ENCODE measurements at regions of chr20 and their contacts with region 1.

Region 1: GRCh38 chr20:10074513-10074912 is 39.7 kb downstream of the ANKEF1 start:
- DNase-seq: peak; percentile 96
- ATAC-seq: peak; percentile 83
- H3K4me3 ChIP-seq: no peak overlapping the region
- H3K27ac ChIP-seq: peak overlapping the region; percentile 57
- H3K4me1 ChIP-seq: peaks cover 44% of the 10 kb centered on the region
- H3K27me3 ChIP-seq: no peaks in the 10 kb centered on the region
- CTCF ChIP-seq: no peak

Region 2: DNA sequence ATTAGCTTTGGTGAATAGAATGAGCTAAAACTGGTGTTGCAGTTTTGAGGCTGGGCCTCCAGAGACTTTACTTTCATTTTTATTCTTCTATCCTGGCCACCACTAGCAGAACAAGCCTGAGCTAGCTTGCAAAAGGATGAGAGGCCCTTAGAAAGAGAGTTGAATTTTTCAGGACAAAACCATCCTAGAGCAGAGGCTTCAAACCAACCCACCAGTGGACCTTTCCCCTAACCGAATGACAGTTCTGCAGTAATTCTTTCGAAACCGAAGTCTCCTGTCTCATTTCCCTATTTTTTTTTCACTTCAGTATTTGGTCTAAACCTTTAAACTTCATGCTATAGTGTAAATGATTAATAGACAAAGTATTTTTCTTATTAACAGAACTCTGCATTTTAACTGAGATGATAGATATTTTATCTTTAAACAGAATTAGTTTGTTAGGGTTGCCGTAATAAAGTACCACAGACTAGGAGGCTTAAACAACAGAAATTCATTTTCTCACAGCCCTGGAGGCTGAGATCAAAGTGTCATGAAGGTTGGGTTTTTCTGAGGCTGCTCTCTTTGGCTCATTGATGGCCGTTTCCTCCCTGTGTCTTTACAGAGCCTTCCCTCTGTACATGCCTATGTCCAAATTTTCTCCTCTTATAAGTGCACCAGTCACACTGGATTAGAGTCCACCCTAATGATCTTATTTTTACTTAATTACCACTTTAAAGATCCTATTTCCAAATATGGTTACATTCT is 155.1 kb before region 1 on chr20:
- CTCF ChIA-PET with region 1: no interaction called
- POLR2A ChIA-PET with region 1: no interaction called
- intact Hi-C with region 1: no loop called
- DNase-seq: no peak
- ATAC-seq: no peak
- H3K4me3 ChIP-seq: no peak overlapping the region
- H3K27ac ChIP-seq: no peak overlapping the region
- H3K4me1 ChIP-seq: no peaks in the 10 kb centered on the region
- H3K27me3 ChIP-seq: peaks cover 45% of the 10 kb centered on the region
- CTCF ChIP-seq: no peak

Region 3: DNA sequence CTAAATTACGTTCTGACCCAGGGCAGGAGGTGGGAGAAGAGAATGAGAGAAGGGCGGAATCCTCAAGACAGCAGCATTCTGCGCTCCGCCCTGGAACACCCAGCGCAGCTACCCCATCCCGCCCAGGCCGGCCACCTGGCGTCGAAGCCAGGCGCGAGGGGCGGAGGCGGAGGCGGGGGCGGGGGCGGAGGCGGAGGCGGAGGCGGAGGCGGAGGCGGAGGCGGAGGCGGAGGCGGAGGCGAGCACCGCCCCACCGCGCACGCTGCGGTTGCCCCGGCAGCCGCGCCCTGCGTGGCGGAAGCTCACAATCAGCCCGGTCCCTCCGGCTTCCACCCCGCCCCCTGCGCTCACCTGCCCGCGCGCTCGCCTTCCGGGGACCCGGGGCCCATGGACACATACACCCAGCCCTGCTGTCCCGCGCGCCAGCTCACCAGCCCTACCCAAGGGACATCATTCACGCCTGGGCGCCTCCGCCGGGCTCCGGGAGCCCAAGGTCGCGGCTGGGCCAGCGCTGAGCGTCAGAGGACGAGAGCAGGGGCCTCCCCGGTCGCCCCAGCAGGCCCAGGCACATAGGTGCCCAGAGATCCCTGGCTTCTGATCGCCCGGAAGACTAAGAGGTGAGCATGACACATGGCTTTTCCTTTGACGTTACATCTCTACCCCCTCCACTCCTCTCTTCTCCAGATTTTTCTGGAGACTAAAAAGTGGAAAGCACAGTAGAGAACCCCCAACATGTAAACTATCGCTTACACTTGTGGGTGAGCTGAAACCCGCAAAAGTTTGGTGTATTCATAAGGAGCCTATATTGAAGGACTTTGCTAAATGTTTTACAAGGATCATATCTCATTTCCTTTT is 39.6 kb before region 1 on chr20 and contains the start of gene ANKEF1:
- CTCF ChIA-PET with region 1: no interaction called
- POLR2A ChIA-PET with region 1: no interaction called
- intact Hi-C with region 1: loop called (anchors 1 kb)
- DNase-seq: peak; percentile 94
- ATAC-seq: peak; percentile 98
- H3K4me3 ChIP-seq: peak within 1 kb of the TSS; percentile 84
- H3K27ac ChIP-seq: peak within 1 kb of the TSS; percentile 67
- H3K4me1 ChIP-seq: peaks cover 20% of the 10 kb centered on the region
- H3K27me3 ChIP-seq: peaks cover 13% of the 10 kb centered on the region
- CTCF ChIP-seq: no peak
- total RNA-seq, gene ANKEF1: 11.6 and 13.1 TPM in 2 replicates

Region 4: GRCh38 chr20:10040070-10040975 is 34.2 kb before region 1 on chr20:
- CTCF ChIA-PET with region 1: no interaction called
- POLR2A ChIA-PET with region 1: no interaction called
- intact Hi-C with region 1: loop called (anchors 1 kb)
- DNase-seq: peak; percentile 98
- ATAC-seq: peak; percentile 99
- H3K4me3 ChIP-seq: no peak overlapping the region
- H3K27ac ChIP-seq: peak overlapping the region; percentile 20; the same call in 1 of the 2 replicates
- H3K4me1 ChIP-seq: peaks cover 22% of the 10 kb centered on the region
- H3K27me3 ChIP-seq: no peaks in the 10 kb centered on the region
- CTCF ChIP-seq: no peak

Region 5: GRCh38 chr20:10090588-10091166 is 16.2 kb after region 1 on chr20:
- CTCF ChIA-PET with region 1: interaction called, 11 read pairs
- POLR2A ChIA-PET with region 1: interaction called, 3 read pairs
- intact Hi-C with region 1: loop called (anchors 2 kb)
- DNase-seq: peak; percentile 81
- ATAC-seq: peak; percentile 84
- H3K4me3 ChIP-seq: no peak overlapping the region
- H3K27ac ChIP-seq: no peak overlapping the region
- H3K4me1 ChIP-seq: peaks cover 19% of the 10 kb centered on the region
- H3K27me3 ChIP-seq: peaks cover 2% of the 10 kb centered on the region; the same call in 1 of the 2 replicates
- CTCF ChIP-seq: peak; percentile 93

Region 6: GRCh38 chr20:10434467-10434831 is 359.9 kb after region 1 on chr20:
- CTCF ChIA-PET with region 1: no interaction called
- POLR2A ChIA-PET with region 1: no interaction called
- intact Hi-C with region 1: no loop called
- DNase-seq: peak; percentile 99
- ATAC-seq: peak; percentile 76
- H3K4me3 ChIP-seq: peak overlapping the region; percentile 73
- H3K27ac ChIP-seq: peak overlapping the region; percentile 79
- H3K4me1 ChIP-seq: peaks cover 42% of the 10 kb centered on the region
- H3K27me3 ChIP-seq: no peaks in the 10 kb centered on the region
- CTCF ChIP-seq: no peak

Region 7: GRCh38 chr20:10521068-10521831 is 446.7 kb after region 1 on chr20:
- CTCF ChIA-PET with region 1: no interaction called
- POLR2A ChIA-PET with region 1: no interaction called
- intact Hi-C with region 1: loop called (anchors 10 kb)
- DNase-seq: peak; percentile 84
- ATAC-seq: peak; percentile 75
- H3K4me3 ChIP-seq: no peak overlapping the region
- H3K27ac ChIP-seq: peak overlapping the region; percentile 44
- H3K4me1 ChIP-seq: peaks cover 59% of the 10 kb centered on the region
- H3K27me3 ChIP-seq: no peaks in the 10 kb centered on the region
- CTCF ChIP-seq: no peak